SK-N-SH (cell line): ENCODE measurements at regions of chr1 and their contacts with region 1.

Region 1: DNA sequence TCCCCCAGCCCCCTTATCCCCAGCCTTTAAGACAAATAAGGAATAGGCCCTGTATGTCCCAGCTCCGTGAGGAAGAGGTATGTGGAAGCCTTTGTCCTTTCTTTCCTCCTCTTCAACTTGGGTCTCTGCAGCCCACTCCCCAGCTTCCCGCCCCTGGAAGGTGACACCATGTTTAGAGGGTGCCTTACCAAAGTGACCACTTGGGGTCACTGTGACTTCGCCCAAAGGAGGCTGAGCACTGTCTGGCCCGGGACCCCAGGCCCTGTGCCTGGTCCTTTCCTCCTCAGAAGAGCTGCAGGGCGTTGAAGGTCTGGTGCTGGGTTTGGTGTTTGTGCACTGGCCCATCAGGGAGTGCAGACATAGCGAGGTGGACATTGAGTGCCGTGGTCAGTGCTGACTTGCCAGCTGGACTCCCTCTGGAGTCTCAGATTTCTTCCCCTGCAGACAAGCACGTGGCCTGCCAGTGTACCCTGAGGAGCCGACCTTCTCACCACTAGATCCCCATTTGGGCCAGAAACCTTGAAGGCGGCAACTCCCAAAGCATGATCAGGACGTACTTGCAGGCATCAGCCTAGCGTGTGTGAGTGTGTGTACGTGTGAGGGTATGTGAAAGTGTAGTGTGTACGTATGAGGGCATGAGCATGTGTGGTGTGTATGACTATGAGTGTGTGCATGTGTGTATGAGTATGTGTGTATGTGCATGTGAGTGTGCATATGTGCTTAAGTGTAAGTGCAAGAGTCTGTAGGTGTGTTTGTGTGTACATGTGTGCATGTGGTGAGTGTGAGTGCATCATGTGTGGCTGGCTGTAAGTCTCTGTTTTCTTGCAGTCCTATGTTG is 181.4 kb upstream of the KIAA0040 start:
- DNase-seq: peak; percentile 77
- H3K4me3 ChIP-seq: peak overlapping the region in 1 of 2 experiments; percentile 29; a peak in 1 of 4 replicates
- H3K27ac ChIP-seq: no peak overlapping the region; a peak in 1 of 4 replicates
- H3K4me1 ChIP-seq: peaks cover 0 to 30% of the 10 kb centered on the region in 2 experiments; a peak in 2 of 4 replicates
- H3K27me3 ChIP-seq: no peaks in the 10 kb centered on the region
- CTCF ChIP-seq: peak; percentile 42
- EP300 ChIP-seq: no peak
- RAD21 ChIP-seq: peak; percentile 90

Region 2: DNA sequence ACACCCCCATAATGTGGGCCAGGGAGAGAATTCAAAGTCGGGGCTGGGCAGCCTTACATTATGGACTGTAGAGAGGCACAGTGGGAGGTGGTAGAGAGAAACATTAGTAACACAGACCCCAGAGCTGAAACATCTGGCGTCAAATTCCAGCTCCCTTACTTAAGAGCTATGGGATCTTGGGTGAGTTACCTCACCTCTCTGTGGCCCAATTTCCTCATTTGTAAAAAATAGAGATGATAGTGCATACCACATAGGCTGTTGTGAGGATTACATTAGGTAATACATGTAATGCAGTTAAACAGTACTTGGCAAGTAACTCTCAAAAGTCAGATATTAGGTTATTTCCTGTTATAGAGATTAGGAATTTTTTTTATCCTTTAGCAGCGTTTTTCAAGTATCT is 20.9 kb before region 1 on chr1:
- CTCF ChIA-PET with region 1: interaction called, 32 read pairs
- POLR2A ChIA-PET with region 1: no interaction called
- DNase-seq: no peak
- H3K4me3 ChIP-seq: no peak overlapping the region
- H3K27ac ChIP-seq: no peak overlapping the region
- H3K4me1 ChIP-seq: no peaks in the 10 kb centered on the region
- H3K27me3 ChIP-seq: no peaks in the 10 kb centered on the region
- CTCF ChIP-seq: no peak
- EP300 ChIP-seq: no peak
- RAD21 ChIP-seq: no peak

Region 3: DNA sequence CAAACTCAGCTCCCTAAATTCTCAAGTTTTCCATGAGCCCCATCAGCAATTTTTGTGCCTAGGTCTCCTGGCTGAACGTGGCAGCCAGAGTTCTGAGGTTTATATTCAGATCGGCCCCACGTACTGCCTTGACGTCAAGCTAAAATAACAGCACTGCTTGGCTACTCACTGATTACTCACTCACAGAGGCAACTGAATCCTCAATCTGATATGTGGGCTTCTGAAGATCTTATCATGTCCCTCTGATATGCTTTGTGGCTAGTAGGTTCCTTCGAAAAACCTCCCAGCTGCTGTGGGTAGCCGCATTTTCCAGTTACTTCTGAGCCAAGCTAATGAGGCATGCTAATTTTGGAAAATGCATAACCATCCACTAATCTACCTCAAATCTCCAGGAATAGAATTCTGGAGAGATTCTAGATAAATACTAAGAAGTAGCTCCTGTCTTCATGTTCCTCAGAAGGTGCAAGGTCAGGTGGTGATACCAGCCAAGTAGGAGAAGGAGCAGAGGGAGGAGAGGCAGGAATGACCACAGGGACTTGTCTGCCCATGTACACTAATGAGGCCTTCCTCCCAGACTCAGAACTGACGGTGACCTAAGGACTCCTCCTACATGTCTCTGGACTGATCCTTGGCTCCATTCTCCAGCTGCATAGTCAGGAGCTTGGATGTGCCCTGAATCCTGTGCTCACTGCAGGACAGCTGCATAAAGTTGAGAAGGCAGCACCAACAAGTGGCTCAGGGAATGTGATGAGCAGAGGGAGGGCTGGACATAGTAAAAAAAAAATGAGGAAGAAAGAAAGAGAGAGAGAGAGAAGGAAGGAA is 105.7 kb after region 1 on chr1:
- CTCF ChIA-PET with region 1: interaction called, 29 read pairs
- POLR2A ChIA-PET with region 1: no interaction called
- DNase-seq: no peak
- H3K4me3 ChIP-seq: no peak overlapping the region
- H3K27ac ChIP-seq: no peak overlapping the region; a peak in 1 of 4 replicates
- H3K4me1 ChIP-seq: peaks cover 0 to 16% of the 10 kb centered on the region in 2 experiments; a peak in 2 of 4 replicates
- H3K27me3 ChIP-seq: no peaks in the 10 kb centered on the region
- CTCF ChIP-seq: no peak
- EP300 ChIP-seq: no peak
- RAD21 ChIP-seq: no peak

Region 4: DNA sequence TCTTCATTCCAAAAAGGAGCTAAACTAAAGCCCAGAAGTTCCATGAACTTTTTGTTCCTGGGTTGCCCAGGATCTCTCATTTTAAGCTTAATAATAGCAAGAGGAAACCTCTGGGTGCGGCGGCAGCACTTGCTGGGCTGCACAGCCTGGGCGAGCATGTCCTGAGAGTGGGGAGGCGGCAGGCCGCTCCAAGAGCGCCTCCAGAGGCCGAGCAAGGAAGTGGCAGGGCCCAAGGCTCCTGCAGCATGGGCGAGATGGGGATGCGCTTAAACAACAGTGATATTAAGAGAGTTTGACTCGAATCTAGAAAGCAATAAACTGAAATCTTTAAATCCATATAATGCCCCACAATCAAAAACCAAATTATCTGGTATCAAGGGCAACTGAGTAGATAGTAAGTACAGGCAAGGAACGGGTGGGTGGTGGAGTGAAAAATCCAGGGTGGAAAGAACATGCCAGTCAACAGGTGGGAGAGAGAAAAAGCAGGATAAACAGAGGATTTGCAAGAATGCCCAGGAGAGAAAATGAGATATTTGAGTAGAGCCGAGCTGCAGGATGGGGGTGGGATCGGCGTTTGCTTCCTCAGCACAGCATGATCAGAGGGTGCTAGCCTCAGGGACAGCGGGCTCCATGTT is 383.5 kb after region 1 on chr1:
- CTCF ChIA-PET with region 1: interaction called, 12 read pairs
- POLR2A ChIA-PET with region 1: no interaction called
- DNase-seq: no peak
- H3K4me3 ChIP-seq: no peak overlapping the region; a peak in 1 of 4 replicates
- H3K27ac ChIP-seq: no peak overlapping the region
- H3K4me1 ChIP-seq: no peaks in the 10 kb centered on the region; a peak in 1 of 4 replicates
- H3K27me3 ChIP-seq: no peaks in the 10 kb centered on the region
- CTCF ChIP-seq: peak; percentile 26
- EP300 ChIP-seq: no peak
- RAD21 ChIP-seq: peak; percentile 14; the same call in 1 of the 2 replicates

Region 5: GRCh38 chr1:176058686-176059085 is 684.7 kb after region 1 on chr1:
- CTCF ChIA-PET with region 1: interaction called, 17 read pairs
- POLR2A ChIA-PET with region 1: no interaction called
- DNase-seq: peak; percentile 39
- H3K4me3 ChIP-seq: no peak overlapping the region
- H3K27ac ChIP-seq: peak overlapping the region in 1 of 2 experiments; percentile 90; a peak in 2 of 4 replicates
- H3K4me1 ChIP-seq: peaks cover 0 to 10% of the 10 kb centered on the region in 2 experiments; a peak in 2 of 4 replicates
- H3K27me3 ChIP-seq: no peaks in the 10 kb centered on the region
- CTCF ChIP-seq: no peak
- EP300 ChIP-seq: no peak
- RAD21 ChIP-seq: no peak